GM10248 (cell line): ENCODE measurements at regions of chr5 and their contacts with region 1.

Region 1: GRCh38 chr5:72523960-72524582 is 16.9 kb upstream of the ZNF366 start:
- DNase-seq: peak; percentile 51
- CTCF ChIP-seq: peak; percentile 58

Region 2: GRCh38 chr5:72355706-72356299 is 168.3 kb before region 1 on chr5:
- CTCF ChIA-PET with region 1: interaction called, 11 read pairs
- POLR2A ChIA-PET with region 1: no interaction called
- DNase-seq: no peak
- CTCF ChIP-seq: peak; percentile 33

Region 3: GRCh38 chr5:72394688-72395087 is 129.4 kb before region 1 on chr5:
- CTCF ChIA-PET with region 1: interaction called, 20 read pairs
- POLR2A ChIA-PET with region 1: no interaction called
- DNase-seq: peak; percentile 53
- CTCF ChIP-seq: peak; percentile 52

Region 4: GRCh38 chr5:72465601-72466563 is 58.2 kb before region 1 on chr5:
- CTCF ChIA-PET with region 1: interaction called, 16 read pairs
- POLR2A ChIA-PET with region 1: no interaction called
- DNase-seq: peak; percentile 57
- CTCF ChIP-seq: no peak

Region 5: GRCh38 chr5:72503888-72504491 is 20.1 kb before region 1 on chr5:
- CTCF ChIA-PET with region 1: interaction called, 14 read pairs
- POLR2A ChIA-PET with region 1: no interaction called
- DNase-seq: no peak
- CTCF ChIP-seq: no peak

Region 6: GRCh38 chr5:72556351-72557166 is 32.5 kb after region 1 on chr5:
- CTCF ChIA-PET with region 1: interaction called, 11 read pairs
- POLR2A ChIA-PET with region 1: no interaction called
- DNase-seq: peak; percentile 76
- CTCF ChIP-seq: peak; percentile 33

Region 7: GRCh38 chr5:73387601-73388305 is 863.7 kb after region 1 on chr5:
- CTCF ChIA-PET with region 1: no interaction called
- POLR2A ChIA-PET with region 1: no interaction called
- DNase-seq: peak; percentile 39
- CTCF ChIP-seq: no peak